Activated CD4-positive, alpha-beta T cell treated with anti-CD3 and anti-CD28 coated beads, Interleukin-2, amount 10 ng/mL, durations not matched to agents 7 days and 5 days (primary cell): ENCODE measurements at regions of chr14 and their contacts with region 1.

Region 1: GRCh38 chr14:91893007-91893406 is 25.7 kb upstream of the TC2N start:
- DNase-seq: no peak
- H3K4me3 Mint-ChIP-seq: no peak overlapping the region
- H3K27ac Mint-ChIP-seq: no peak overlapping the region
- H3K4me1 Mint-ChIP-seq: peaks cover 54% of the 10 kb centered on the region
- H3K27me3 Mint-ChIP-seq: no peaks in the 10 kb centered on the region

Region 2: DNA sequence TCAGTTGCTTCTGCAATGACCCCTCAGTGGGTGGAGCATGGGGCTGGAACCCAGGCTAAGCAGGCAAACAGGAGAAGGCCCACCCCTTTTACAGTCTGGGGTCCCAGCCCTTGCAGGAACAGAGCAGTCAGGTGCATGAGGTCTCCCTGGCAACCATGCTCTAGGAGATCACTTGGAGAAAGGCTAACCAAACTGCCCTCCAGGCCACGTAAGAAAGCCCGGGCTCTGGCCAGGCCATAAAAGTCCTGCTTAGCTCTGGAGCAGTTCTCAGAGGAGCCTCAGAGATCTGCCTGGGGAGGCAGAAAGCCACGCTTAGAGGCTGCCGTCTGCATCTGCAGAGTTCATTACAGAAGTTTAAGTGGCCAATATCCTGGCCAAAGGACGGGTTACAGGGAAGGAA is 10.6 kb before region 1 on chr14:
- CTCF ChIA-PET with region 1: interaction called, 10 read pairs
- POLR2A ChIA-PET with region 1: no interaction called
- DNase-seq: no peak
- H3K4me3 Mint-ChIP-seq: no peak overlapping the region
- H3K27ac Mint-ChIP-seq: peak overlapping the region; percentile 38
- H3K4me1 Mint-ChIP-seq: peaks cover 42% of the 10 kb centered on the region
- H3K27me3 Mint-ChIP-seq: no peaks in the 10 kb centered on the region

Region 3: DNA sequence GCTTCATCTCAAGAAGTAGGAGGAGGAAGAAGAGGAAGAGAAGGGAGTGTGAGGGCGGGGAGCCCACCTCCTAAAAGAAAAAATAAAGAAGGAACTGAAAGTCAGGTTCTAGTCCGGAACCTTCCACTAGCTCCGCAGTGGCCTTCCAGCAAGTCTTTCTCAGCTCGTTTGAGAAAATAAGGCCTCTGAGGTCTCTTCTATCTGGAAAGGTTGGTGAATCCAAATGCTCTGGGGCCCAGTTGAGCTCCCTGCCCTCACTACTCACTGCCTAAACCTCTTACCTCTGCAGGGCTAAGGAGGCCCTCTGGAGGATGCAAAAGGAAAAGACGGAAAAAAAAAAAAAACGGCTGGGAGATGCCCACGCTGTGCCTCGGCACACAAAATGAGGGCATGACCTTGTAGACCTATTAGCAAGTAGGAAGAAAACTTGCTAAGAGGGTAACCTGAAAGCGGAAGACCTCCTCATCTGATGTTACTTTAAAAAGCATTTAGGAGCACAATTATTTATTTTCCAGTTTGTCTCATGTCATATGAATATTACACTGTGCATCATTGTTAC is 18.5 kb after region 1 on chr14:
- CTCF ChIA-PET with region 1: interaction called, 15 read pairs
- POLR2A ChIA-PET with region 1: no interaction called
- DNase-seq: peak; percentile 69
- H3K4me3 Mint-ChIP-seq: no peak overlapping the region
- H3K27ac Mint-ChIP-seq: peak overlapping the region; percentile 81
- H3K4me1 Mint-ChIP-seq: peaks cover 24% of the 10 kb centered on the region
- H3K27me3 Mint-ChIP-seq: peaks cover 3% of the 10 kb centered on the region

Region 4: DNA sequence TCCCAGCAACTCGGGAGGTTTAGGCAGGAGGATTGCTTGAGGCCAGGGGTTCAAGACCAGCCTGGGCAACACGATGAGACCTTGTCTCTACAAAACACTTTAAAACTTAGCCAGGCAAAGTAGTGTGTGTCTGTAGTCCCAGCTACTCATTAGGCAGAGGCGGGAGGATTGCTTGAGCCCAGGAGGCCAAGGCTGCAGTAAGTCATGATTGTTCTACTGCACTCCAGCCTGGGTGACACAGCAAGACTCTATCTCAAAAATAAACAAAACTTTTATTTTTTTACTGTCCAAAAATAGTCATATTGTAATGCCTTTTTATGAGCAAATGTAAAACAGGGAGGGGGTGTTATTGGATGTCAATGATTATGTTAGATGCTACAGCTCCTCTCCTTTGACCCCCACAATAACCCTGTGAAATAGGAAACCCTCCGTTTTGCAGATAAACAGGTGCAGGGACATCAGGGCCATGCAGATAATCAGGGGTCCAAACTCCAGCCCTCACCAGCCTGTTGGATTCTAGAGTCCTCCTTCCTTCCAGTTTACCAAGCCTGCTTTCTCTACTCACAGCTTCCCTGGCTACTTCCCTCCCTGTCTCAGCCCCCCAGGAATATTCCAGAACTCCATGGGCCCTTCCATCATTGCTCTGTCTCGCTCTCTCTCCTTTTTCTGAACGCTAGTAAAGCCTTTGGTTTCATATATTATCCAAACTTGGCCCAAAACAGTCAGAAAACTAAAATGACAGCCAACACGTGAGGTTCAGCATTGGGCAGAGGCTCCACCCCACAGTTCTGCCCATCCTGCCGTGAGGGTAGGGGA is 60.4 kb after region 1 on chr14:
- CTCF ChIA-PET with region 1: no interaction called
- POLR2A ChIA-PET with region 1: no interaction called
- DNase-seq: no peak
- H3K4me3 Mint-ChIP-seq: no peak overlapping the region
- H3K27ac Mint-ChIP-seq: no peak overlapping the region
- H3K4me1 Mint-ChIP-seq: no peaks in the 10 kb centered on the region
- H3K27me3 Mint-ChIP-seq: peaks cover 14% of the 10 kb centered on the region

Region 5: DNA sequence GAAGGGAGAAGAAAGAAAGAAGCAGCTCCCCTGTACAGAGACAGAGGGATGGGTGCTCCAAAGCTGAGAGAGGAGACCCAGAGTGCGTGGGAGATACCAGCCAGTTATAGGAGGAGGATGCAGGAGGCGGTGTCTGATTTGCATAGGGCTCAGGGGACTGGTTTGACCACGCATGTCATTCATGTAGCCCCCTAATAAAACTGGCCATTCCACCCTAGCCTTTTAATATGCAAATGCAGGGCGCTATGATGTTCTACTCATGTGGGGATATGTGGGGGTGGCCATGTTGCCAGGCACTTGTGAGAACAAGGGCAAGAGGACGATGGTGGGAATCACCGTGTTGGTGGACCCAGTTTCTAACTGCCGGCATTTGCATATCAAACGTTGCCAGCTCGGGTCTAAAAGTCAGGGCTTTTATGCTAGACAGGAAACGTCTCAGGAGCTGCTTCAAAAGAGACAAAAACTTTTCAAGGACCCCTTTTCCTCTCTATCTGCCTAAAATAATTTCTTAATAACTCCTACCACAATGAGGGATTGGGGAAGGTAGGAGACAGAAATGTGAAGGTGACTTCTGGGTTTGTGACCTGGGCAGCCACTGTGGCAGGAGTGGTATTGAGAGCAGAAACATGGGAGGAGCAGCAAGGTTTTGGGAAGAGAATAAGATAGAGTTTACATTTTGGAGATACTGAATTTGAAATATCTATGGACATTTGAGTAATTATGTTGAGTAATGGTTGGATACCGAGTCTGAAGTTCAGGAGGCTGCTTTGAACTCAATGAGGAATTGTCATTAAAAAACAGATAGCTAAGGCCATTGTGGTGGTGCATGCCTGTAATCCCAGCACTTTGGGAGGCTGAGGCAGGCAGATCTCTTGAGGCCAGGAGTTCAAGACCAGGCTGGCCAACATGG is 215.6 kb after region 1 on chr14:
- CTCF ChIA-PET with region 1: no interaction called
- POLR2A ChIA-PET with region 1: no interaction called
- DNase-seq: no peak
- H3K4me3 Mint-ChIP-seq: no peak overlapping the region
- H3K27ac Mint-ChIP-seq: no peak overlapping the region
- H3K4me1 Mint-ChIP-seq: peaks cover 33% of the 10 kb centered on the region
- H3K27me3 Mint-ChIP-seq: no peaks in the 10 kb centered on the region